Activated T-helper 1 cell treated with anti-CD3 and anti-CD28 coated beads, Interleukin-12 subunit alpha, Interleukin-12 subunit beta, Interleukin-2, Interleukin-4 antibody, amounts not matched to agents 30 ng/mL and 10 ng/mL and 1 ng/mL, durations not matched to agents 14 hours and 24 hours and 36 hours (primary cell): ENCODE measurements at regions of chr11 and their contacts with region 1.

Region 1: DNA sequence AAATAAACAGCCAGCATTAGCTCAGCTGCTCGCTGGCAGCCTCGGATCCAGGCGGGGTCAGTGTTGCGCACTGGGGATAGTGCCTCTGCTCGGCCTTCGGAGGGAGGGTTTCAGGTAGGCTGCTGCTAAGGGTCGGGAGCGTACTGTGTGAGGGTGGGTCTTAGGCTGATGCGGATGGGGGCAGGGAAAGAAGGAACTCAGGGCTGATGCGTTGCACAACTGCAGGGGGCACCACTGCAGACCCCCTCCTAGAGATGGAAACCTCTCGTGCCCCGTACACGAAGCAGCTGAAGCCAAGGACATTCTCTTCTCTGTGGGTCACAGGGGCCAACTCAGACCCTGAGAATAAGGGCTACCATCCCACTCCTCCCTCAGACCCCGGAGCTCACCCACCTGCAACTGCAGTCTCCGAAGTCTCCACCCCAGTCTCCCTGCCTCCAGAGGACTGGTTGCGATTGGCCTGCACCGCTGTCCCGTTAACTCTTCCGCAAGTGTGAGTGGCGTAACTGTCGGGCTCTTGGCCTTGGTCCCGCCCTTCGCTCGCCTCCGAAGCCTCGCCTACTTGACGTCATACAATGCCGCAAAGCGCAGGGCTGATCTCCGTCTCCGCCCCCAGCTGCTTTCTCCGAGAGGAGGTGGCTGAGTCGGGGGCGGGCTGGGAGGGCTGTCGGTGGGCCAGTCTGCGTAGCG is at the start of gene KBTBD3:
- DNase-seq: peak; percentile 98
- H3K4me3 Mint-ChIP-seq: peak within 1 kb of the TSS; percentile 96
- H3K27ac Mint-ChIP-seq: peak within 1 kb of the TSS; percentile 95
- H3K4me1 Mint-ChIP-seq: peaks cover 61% of the 10 kb centered on the region
- H3K27me3 Mint-ChIP-seq: no peaks in the 10 kb centered on the region
- total RNA-seq, gene KBTBD3: 4.1 and 5.8 TPM in 2 replicates

Region 2: DNA sequence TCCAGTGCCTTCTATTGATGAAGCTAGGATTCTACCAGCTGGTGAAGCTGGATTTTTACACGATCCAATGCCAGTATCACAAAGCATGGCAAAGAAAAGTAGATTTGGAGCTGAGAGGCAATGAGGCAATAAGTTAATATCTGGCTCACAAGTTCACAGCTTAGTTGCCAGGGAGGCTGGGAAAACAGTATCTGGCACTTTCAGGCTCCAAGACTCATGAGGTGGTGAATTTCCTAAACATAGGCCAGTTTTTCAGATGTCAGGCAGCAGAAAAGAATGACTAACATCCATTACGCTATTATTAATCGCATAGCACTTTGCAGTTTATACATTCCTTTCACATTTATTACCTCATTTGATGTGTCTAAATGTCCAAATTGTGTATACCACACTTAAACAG is 344.5 kb before region 1 on chr11:
- intact Hi-C with region 1: no loop called
- DNase-seq: no peak
- H3K4me3 Mint-ChIP-seq: no peak overlapping the region
- H3K27ac Mint-ChIP-seq: no peak overlapping the region
- H3K4me1 Mint-ChIP-seq: no peaks in the 10 kb centered on the region
- H3K27me3 Mint-ChIP-seq: no peaks in the 10 kb centered on the region

Region 3: GRCh38 chr11:106021967-106022794 is 54.9 kb before region 1 on chr11 and contains the start of gene MSANTD4:
- intact Hi-C with region 1: loop called (anchors 1 kb)
- DNase-seq: peak; percentile 93
- H3K4me3 Mint-ChIP-seq: peak within 1 kb of the TSS; percentile 93
- H3K27ac Mint-ChIP-seq: peak within 1 kb of the TSS; percentile 93
- H3K4me1 Mint-ChIP-seq: peaks cover 39% of the 10 kb centered on the region
- H3K27me3 Mint-ChIP-seq: peaks cover 15% of the 10 kb centered on the region
- total RNA-seq, gene MSANTD4: 24.2 and 24.3 TPM in 2 replicates

Region 4: DNA sequence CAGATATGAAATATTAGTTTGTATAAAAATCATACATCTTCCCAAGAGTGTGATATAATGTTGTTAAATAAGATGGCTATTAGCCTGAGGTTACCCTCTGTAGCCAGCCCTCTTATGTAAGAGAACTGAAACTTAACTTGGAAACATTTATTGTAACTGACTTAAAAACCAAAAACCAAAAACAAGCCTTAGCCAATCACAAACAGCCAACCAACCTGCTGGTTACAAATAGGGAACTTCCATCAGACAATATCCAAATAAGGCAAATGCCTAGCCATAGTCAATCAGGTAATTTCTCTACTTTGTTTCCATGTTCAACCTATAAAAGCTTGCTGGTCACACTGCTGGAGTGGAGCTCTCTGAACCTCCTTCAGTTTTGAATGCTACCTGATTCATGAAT is 14.1 kb before region 1 on chr11:
- intact Hi-C with region 1: loop called (anchors 1 kb)
- DNase-seq: no peak
- H3K4me3 Mint-ChIP-seq: no peak overlapping the region
- H3K27ac Mint-ChIP-seq: no peak overlapping the region
- H3K4me1 Mint-ChIP-seq: peaks cover 15% of the 10 kb centered on the region
- H3K27me3 Mint-ChIP-seq: no peaks in the 10 kb centered on the region

Region 5: GRCh38 chr11:106087815-106088435 is 10.9 kb after region 1 on chr11:
- intact Hi-C with region 1: loop called (anchors 1 kb)
- DNase-seq: no peak
- H3K4me3 Mint-ChIP-seq: no peak overlapping the region
- H3K27ac Mint-ChIP-seq: no peak overlapping the region
- H3K4me1 Mint-ChIP-seq: peaks cover 50% of the 10 kb centered on the region
- H3K27me3 Mint-ChIP-seq: no peaks in the 10 kb centered on the region

Region 6: DNA sequence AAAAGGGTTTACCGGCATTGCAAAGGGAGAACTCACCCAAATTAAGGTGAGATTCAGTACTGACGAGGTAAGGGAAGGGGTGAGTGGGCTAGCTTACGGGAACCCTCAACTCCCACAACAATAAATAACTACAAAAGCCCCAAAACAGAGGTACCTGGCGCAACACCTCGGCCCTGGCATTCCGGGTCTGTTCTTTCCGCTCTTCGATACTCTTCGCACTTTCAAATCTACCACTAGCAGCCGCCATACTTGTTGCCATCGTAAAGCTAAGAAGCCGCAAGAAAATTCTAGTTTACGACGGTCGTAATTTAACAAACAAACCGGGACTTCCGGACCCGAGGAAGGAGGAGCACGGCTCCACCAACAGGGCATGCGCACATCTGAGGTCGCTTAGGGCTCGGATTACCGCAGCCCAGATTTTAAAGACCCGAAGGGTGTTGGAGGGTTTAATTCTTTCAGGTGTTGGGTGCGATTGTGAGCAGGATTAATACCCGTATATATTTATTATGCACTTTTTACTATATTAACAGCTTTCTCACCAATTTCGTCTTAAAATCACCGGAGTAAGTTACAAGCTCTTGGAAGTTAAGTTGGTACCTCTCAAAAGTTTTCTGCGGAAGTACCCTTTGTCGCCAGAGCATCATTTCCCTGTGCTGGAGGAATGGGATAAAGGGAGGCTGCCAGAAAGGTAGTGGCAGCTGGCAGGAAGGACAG is 1380.7 kb after region 1 on chr11 and contains the start of gene CWF19L2:
- intact Hi-C with region 1: loop called (anchors 2 kb)
- DNase-seq: peak; percentile 88
- H3K4me3 Mint-ChIP-seq: peak within 1 kb of the TSS; percentile 91
- H3K27ac Mint-ChIP-seq: peak within 1 kb of the TSS; percentile 87
- H3K4me1 Mint-ChIP-seq: peaks cover 28% of the 10 kb centered on the region
- H3K27me3 Mint-ChIP-seq: peaks cover 9% of the 10 kb centered on the region
- total RNA-seq, gene CWF19L2: 16.5 and 16.7 TPM in 2 replicates

Region 7: DNA sequence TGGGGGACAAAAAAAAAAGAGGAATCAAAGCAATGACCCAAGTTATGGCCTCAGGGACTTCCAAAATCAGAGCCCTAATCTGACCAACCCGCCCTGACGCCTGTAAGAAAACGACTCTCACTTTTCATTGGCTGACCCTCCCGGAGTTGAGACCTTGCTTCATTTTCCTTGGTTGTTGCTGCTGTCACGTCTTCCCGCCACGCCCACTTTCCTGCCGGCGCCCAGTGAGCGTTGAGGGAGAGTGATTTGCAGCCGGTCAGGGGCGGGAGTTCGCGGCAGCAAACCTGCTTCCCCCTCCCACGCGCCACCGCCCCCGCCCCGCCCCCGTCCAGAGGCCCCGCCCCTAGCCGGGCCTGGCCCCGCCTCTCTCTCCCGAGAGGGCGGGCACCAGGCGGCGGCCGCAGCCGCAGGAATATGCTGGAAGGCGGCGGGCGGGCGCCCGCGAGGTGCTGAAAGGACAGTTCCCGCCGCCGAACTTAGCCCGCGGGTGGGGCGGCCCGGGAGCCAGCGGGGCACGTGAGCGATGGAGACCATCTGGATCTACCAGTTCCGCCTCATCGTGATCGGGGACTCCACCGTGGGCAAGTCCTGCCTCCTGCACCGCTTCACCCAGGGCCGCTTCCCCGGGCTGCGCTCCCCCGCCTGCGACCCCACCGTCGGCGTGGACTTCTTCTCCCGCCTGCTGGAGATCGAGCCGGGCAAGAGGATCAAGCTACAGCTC is 1851.1 kb after region 1 on chr11 and contains the start of gene RAB39A:
- intact Hi-C with region 1: loop called (anchors 10 kb)
- DNase-seq: peak; percentile 71
- H3K4me3 Mint-ChIP-seq: peak within 1 kb of the TSS; percentile 71
- H3K27ac Mint-ChIP-seq: no peak within 1 kb of the TSS
- H3K4me1 Mint-ChIP-seq: peaks cover 6% of the 10 kb centered on the region
- H3K27me3 Mint-ChIP-seq: peaks cover 25% of the 10 kb centered on the region
- total RNA-seq, gene RAB39A: not detected in 2 replicates